T-cell (primary cell): ENCODE measurements at regions of chr2 and their contacts with region 1.

Region 1: DNA sequence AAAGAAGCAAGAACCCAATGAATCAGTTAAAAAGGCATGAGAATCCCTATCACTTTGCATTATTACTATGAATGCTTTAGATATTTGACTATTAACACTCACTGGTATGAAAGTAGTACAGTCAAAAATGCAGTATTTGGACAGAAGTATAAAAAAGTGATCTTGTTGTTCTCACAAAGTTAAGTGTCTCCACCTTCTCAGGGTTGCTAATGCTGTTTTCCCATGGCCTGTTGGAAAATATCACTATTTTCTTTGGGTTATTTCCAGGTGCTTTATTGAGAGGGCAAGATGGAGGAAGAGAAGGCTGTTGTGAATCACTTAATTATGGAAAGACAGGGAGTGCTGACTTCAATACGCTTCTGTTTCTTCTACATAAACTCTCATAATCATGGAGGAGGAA is 13.6 kb upstream of the CREB1 start:
- DNase-seq: no peak
- ATAC-seq: no peak
- H3K4me3 ChIP-seq: no peak overlapping the region
- H3K4me3 Mint-ChIP-seq: no peak overlapping the region
- H3K27ac ChIP-seq: no peak overlapping the region
- H3K27ac Mint-ChIP-seq: no peak overlapping the region
- H3K4me1 ChIP-seq: peaks cover 0 to 13% of the 10 kb centered on the region in 2 experiments
- H3K4me1 Mint-ChIP-seq: peaks cover 0 to 10% (median 5%) of the 10 kb centered on the region in 3 donors
- H3K27me3 ChIP-seq: no peaks in the 10 kb centered on the region
- H3K27me3 Mint-ChIP-seq: peaks cover 0 to 3% of the 10 kb centered on the region in 2 donors

Region 2: DNA sequence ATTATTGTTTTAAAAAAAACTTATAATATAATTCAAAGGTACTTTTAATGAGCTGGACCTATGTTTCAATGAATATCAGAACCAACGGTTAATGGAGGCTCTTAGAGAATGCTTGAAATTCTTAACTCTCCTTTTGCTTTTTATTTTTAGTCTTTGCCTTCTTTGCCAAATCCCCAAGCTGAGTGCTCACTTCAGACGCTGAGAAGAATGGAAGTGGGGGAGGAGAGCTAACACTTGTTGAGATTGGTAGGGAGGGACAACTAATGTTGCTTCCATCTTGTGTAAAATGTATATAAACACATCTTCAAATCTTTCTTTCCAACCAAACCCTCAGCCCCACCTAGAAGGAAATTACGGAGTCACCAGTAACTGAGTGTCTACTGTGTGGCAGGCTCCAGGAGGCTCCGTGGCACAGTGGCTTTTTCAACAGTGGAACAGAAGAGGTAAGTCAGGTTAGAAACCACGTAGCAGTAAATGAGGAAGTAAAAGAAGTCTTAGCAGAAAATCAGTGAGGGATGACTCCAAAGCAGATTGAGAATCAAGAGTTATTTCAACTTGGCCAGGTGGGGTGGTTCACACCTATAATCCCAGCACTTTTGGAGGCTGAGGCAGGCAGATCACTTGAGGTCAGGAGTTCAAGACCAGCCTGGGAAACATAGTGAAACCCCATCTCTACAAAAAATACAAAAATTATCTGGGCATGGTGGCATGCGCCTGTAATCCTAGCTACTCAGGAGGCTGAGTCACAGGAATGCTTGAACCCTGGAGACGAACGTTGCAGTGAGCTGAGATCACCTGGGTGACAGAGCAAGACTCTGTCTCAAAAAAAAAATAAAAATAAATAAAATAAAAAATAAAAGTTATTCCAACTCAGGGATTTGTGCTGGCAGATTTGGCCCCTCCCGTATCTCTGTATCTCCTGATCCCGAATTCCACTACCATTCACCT is 31.5 kb before region 1 on chr2:
- CTCF ChIA-PET with region 1: no interaction called
- POLR2A ChIA-PET with region 1: interaction called in 1 of 2 experiments, 16 read pairs
- DNase-seq: no peak
- ATAC-seq: no peak
- H3K4me3 ChIP-seq: no peak overlapping the region
- H3K4me3 Mint-ChIP-seq: no peak overlapping the region
- H3K27ac ChIP-seq: no peak overlapping the region
- H3K27ac Mint-ChIP-seq: no peak overlapping the region
- H3K4me1 ChIP-seq: peaks cover 7 to 8% of the 10 kb centered on the region in 2 experiments
- H3K4me1 Mint-ChIP-seq: peaks cover 17 to 29% (median 18%) of the 10 kb centered on the region in 3 donors
- H3K27me3 ChIP-seq: no peaks in the 10 kb centered on the region
- H3K27me3 Mint-ChIP-seq: no peaks in the 10 kb centered on the region

Region 3: DNA sequence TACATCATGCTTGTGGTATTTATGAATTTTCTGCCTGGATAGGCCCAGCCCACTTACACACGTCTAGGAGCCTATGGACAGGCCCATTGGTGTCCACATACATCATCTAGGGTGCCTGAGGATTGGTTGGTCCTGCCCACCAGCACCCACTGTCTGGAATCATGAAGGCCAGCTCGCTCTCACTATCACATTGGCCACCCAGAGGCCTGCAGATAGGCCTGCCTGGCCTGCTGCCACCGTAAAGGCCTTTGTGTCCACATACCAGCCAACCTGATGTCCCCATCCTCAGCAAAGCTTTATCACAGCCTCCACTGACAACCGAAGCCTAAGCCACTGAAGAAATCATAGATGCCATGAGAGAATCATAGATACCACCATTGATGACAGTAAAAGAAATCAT is 68.7 kb after region 1 on chr2:
- CTCF ChIA-PET with region 1: no interaction called
- POLR2A ChIA-PET with region 1: no interaction called
- DNase-seq: no peak
- ATAC-seq: no peak
- H3K4me3 ChIP-seq: no peak overlapping the region
- H3K4me3 Mint-ChIP-seq: no peak overlapping the region
- H3K27ac ChIP-seq: no peak overlapping the region
- H3K27ac Mint-ChIP-seq: peak overlapping the region; percentile 24 to 57
- H3K4me1 ChIP-seq: no peaks in the 10 kb centered on the region
- H3K4me1 Mint-ChIP-seq: peaks cover 14 to 26% (median 23%) of the 10 kb centered on the region in 3 donors
- H3K27me3 ChIP-seq: no peaks in the 10 kb centered on the region
- H3K27me3 Mint-ChIP-seq: no peaks in the 10 kb centered on the region